ENCODE measurements at regions of chr16 and their contacts with region 1.

Region 1: DNA sequence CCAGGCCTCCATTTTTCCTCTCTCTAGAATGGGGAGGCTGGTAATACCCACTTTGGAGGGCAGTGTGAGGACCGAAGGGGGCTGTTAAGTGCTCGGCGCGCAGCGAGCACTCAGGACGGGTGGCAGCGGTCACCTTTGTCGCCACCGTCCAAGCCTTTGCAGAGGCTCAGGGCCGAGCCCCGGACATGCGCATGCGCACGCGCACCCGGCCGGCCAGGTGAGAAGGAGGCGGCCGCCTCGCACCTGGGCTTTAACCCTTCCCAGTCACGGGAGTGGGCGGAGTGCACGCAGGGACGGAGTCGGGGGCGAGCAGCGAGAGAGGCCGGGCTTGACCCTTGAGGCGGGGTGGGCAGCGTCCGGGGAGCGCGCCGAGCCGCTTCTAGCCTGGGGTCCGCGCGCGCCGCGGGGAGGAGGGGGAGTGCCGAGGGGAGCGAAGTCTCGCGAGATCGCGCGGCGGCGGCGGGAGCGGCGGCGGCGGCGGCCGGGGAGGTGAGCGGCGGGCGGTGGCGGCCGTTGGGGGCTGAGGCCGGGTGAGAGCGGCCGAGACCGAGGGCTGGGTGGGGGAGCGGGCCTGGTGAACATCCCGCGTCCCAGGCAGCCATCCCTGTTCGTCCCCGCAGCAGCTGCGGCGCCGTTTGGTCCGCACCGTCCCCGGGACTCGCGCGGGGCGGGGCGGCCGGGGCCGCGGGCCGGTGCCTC is at the start of gene MRTFB:
- DNase-seq: peak; percentile 94
- H3K4me3 Mint-ChIP-seq: peak within 1 kb of the TSS; percentile 93
- H3K27ac Mint-ChIP-seq: peak within 1 kb of the TSS; percentile 94
- H3K4me1 Mint-ChIP-seq: peaks cover 43% of the 10 kb centered on the region
- H3K27me3 Mint-ChIP-seq: no peaks in the 10 kb centered on the region
- CTCF ChIP-seq: no peak
- total RNA-seq, gene MRTFB: 67.3 and 69.5 TPM in 2 replicates

Region 2: DNA sequence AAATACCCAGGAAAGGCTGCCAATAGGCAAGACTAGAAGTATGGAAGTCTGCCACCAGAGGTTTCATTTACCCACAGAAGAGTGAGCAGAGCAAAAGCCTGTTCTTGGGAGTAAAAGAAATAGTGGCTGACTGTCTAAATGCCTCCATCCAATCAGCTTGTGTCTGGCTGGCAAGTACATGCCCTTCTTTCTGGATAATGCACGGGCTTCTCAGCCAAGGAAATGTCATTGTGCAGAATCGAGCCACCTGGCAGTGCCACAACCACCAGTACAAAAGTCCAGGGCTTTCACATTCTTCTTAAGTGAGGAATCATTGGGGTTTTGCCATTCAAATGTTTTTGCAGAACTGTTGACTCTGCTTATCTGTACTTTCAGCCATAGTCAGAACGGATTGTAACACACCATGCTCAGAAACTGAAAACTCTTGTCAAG is 161.1 kb before region 1 on chr16:
- CTCF ChIA-PET with region 1: no interaction called
- intact Hi-C with region 1: no loop called
- DNase-seq: peak; percentile 38
- H3K4me3 Mint-ChIP-seq: no peak overlapping the region
- H3K27ac Mint-ChIP-seq: no peak overlapping the region
- H3K4me1 Mint-ChIP-seq: no peaks in the 10 kb centered on the region
- H3K27me3 Mint-ChIP-seq: peaks cover 28% of the 10 kb centered on the region
- CTCF ChIP-seq: no peak

Region 3: GRCh38 chr16:14042706-14043105 is 28.3 kb before region 1 on chr16:
- CTCF ChIA-PET with region 1: no interaction called
- intact Hi-C with region 1: no loop called
- DNase-seq: no peak
- H3K4me3 Mint-ChIP-seq: no peak overlapping the region
- H3K27ac Mint-ChIP-seq: no peak overlapping the region
- H3K4me1 Mint-ChIP-seq: peaks cover 9% of the 10 kb centered on the region
- H3K27me3 Mint-ChIP-seq: no peaks in the 10 kb centered on the region
- CTCF ChIP-seq: no peak

Region 4: DNA sequence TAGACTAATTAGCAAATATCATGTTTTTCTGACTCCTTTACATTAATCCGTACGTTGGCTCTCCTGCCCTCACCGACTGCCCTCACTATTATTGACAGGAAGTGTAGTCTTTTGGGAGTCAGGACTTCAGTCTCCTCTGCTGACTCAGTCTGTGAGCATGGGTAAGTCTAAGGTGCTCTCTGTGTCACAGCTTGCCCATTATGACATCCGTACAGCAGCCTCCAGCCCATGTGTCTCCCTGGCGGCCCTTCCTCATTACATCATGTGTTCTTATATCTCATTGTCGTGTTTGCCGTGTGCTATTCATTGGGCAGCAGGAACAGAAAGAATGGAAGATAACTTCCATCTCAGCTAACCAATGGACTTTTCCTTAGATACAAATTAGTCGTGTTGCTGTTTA is 77.5 kb after region 1 on chr16:
- CTCF ChIA-PET with region 1: no interaction called
- intact Hi-C with region 1: loop called (anchors 5 kb)
- DNase-seq: peak; percentile 28
- H3K4me3 Mint-ChIP-seq: peak overlapping the region; percentile 35
- H3K27ac Mint-ChIP-seq: peak overlapping the region; percentile 94
- H3K4me1 Mint-ChIP-seq: peaks cover 44% of the 10 kb centered on the region
- H3K27me3 Mint-ChIP-seq: no peaks in the 10 kb centered on the region
- CTCF ChIP-seq: no peak

Region 5: DNA sequence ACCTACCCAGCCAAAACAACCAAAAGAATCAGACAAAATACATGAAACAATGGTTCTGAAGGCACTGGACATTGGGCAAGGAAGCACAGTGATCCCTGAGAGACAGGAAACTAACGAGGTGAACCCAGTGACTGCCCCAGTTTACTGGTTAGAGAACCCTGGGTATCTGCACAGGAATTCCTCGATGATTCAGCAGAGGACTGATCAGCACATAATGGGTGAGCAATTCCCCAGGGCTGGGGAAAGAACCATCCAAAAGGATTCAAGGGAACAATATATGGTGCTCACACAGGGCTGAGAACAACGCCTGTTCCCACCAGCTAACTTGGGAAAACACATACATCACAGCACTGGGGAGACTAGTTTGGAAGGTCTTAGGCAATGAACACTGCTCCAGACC is 391.8 kb after region 1 on chr16:
- CTCF ChIA-PET with region 1: no interaction called
- intact Hi-C with region 1: no loop called
- DNase-seq: no peak
- H3K4me3 Mint-ChIP-seq: no peak overlapping the region
- H3K27ac Mint-ChIP-seq: no peak overlapping the region
- H3K4me1 Mint-ChIP-seq: no peaks in the 10 kb centered on the region
- H3K27me3 Mint-ChIP-seq: no peaks in the 10 kb centered on the region
- CTCF ChIP-seq: no peak